Endothelial cell of umbilical vein (primary cell): ENCODE measurements at regions of chr1 and their contacts with region 1.

Region 1: DNA sequence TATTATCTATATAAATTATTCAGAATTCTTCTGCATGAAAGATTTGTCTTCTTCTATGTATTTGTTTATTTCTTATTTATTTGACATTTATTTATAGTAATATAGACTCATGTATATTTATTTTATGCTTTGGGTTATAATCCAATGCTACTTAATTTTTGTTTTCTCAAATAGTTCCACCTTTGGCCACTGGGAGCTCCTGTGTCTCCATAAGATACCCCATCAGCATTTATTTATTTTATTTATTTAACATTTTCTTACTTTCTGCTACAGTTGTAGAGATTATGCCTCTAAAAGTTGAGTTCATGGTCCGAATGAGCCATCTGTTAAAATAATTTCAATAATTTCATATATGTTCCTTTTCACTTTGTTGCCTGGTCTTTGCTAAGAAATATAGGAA is 289.4 kb downstream of the ADGRL2 start:
- DNase-seq: peak; percentile 15
- H3K4me3 ChIP-seq: no peak overlapping the region
- H3K27ac ChIP-seq: no peak overlapping the region
- H3K4me1 ChIP-seq: no peaks in the 10 kb centered on the region
- H3K27me3 ChIP-seq: no peaks in the 10 kb centered on the region
- CTCF ChIP-seq: peak in 1 of 2 donors; percentile 20
- POLR2A ChIP-seq: no peak

Region 2: GRCh38 chr1:82073071-82073470 is 17.0 kb before region 1 on chr1:
- CTCF ChIA-PET with region 1: interaction called, 13 read pairs
- POLR2A ChIA-PET with region 1: no interaction called
- dilution Hi-C with region 1: no loop called
- intact Hi-C with region 1: no loop called
- DNase-seq: no peak
- H3K4me3 ChIP-seq: no peak overlapping the region
- H3K27ac ChIP-seq: no peak overlapping the region
- H3K4me1 ChIP-seq: no peaks in the 10 kb centered on the region
- H3K27me3 ChIP-seq: no peaks in the 10 kb centered on the region
- CTCF ChIP-seq: no peak
- POLR2A ChIP-seq: no peak

Region 3: GRCh38 chr1:82079607-82080006 is 10.5 kb before region 1 on chr1:
- CTCF ChIA-PET with region 1: interaction called, 17 read pairs
- POLR2A ChIA-PET with region 1: no interaction called
- dilution Hi-C with region 1: no loop called
- intact Hi-C with region 1: no loop called
- DNase-seq: no peak
- H3K4me3 ChIP-seq: no peak overlapping the region
- H3K27ac ChIP-seq: no peak overlapping the region
- H3K4me1 ChIP-seq: no peaks in the 10 kb centered on the region
- H3K27me3 ChIP-seq: no peaks in the 10 kb centered on the region
- CTCF ChIP-seq: no peak
- POLR2A ChIP-seq: no peak

Region 4: DNA sequence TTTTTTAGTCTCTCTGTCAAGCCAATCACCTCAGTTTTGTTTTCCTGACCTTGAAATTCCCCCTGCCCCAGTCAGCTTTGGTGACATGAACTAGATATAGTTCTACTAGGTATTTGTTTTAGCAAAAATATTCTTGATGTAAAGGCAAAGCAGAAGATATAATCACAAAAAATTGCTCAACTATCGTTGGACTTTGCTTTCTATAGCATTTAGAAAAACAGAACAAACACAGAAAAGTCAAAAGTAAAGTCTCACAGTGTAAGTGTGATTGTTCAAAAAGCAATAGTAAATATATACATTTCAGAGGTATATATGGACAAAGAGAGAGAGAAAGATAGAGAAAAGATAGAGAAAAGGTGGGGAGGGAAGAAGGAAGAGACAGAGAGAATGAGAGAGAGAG is 16.6 kb after region 1 on chr1:
- CTCF ChIA-PET with region 1: no interaction called
- POLR2A ChIA-PET with region 1: no interaction called
- dilution Hi-C with region 1: no loop called
- intact Hi-C with region 1: no loop called
- DNase-seq: no peak
- H3K4me3 ChIP-seq: no peak overlapping the region
- H3K27ac ChIP-seq: no peak overlapping the region
- H3K4me1 ChIP-seq: no peaks in the 10 kb centered on the region
- H3K27me3 ChIP-seq: no peaks in the 10 kb centered on the region
- CTCF ChIP-seq: no peak
- POLR2A ChIP-seq: no peak